A673 (cell line): ENCODE measurements at regions of chr1 and their contacts with region 1.

Region 1: GRCh38 chr1:60068393-60069045 is 5.1 kb downstream of the C1orf87 start:
- DNase-seq: peak; percentile 51
- H3K4me3 ChIP-seq: no peak overlapping the region
- H3K27ac ChIP-seq: no peak overlapping the region
- H3K4me1 ChIP-seq: peaks cover 4% of the 10 kb centered on the region
- H3K27me3 ChIP-seq: no peaks in the 10 kb centered on the region
- CTCF ChIP-seq: no peak

Region 2: DNA sequence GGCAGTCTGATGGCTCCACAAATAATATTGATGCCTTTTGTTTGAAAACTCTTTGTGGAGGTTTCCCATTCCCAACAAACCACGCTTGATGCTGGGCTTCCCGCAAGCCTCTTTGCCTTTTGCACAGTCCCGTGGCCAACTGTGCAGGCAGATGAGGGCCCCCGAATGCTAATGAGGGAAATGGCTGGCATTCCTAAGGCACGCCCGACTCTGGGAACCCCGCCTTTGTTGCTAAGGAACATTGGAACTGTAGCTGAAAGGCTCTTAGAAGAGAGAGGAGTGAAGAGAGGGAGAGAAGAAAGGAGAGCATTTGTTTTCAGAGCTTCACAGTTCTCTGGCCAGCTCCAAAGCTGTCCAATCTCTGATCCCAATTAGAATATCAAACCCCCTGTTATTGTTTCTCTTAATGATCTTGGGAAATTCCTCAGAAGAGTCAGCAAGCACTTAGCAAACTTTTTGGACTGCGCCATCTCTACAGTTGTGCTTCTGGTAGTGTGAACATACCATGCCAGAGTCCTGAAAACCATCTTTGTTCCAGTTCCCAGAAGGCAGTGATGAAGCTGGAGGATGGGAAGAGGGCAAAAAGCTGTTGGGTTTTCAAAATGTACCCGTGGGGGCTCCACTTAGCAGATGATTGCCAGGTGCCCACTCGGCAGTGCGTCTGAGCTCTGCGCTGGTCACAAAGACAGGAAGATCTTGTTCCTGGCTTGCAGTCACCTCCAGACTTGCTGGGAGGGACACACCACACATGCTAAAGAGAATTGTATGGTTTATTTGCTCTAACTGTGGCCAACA is 81.8 kb before region 1 on chr1:
- CTCF ChIA-PET with region 1: no interaction called
- POLR2A ChIA-PET with region 1: no interaction called
- intact Hi-C with region 1: loop called (anchors 10 kb)
- DNase-seq: peak; percentile 64
- H3K4me3 ChIP-seq: no peak overlapping the region
- H3K27ac ChIP-seq: no peak overlapping the region
- H3K4me1 ChIP-seq: peaks cover 11% of the 10 kb centered on the region
- H3K27me3 ChIP-seq: no peaks in the 10 kb centered on the region
- CTCF ChIP-seq: no peak

Region 3: DNA sequence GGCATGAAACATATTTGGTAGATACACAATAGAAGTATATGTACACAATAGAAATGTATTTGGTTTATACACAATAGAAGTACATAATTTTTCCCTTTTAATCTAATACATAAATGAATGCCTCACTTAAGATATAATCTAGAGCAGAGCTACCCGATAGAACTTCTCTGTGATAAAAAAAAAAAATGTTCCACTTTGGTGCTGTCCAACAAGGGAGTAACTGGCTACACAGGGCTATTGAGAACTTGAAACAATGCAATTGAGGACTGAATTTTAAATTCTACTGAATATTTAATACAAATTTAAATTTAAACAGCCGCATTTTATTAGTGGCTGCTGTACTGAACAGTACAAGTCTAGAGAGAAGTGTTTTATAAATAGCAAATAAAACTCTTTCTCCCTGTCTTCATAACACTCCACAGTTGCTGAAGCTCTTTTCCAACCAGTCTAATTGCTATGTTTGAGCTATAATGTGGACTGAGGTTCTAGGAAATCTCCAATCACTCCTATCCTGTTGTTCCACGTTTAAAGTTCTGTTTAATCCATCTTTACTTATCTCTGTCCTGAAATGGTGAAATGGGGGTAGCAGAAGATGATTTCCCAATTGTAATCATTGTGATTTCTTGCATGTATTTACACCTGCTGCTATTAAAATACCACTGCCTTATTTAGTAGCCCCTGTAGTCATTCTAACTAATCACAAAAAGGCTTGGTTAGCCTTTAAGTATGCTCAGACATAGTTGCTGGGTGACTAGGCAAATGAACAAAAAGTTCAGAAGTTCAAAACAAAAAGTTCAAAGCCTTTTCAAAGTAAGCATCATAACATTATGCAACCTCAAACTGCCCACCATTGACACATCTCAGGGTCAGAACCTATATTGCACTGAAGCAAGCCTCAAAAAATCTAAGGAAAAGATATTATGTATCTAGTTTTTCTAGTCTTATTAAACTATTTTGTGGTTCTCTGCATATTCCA is 197.3 kb after region 1 on chr1:
- CTCF ChIA-PET with region 1: no interaction called
- POLR2A ChIA-PET with region 1: interaction called, 11 read pairs
- intact Hi-C with region 1: no loop called
- DNase-seq: no peak
- H3K4me3 ChIP-seq: no peak overlapping the region
- H3K27ac ChIP-seq: no peak overlapping the region
- H3K4me1 ChIP-seq: no peaks in the 10 kb centered on the region
- H3K27me3 ChIP-seq: peaks cover 42% of the 10 kb centered on the region
- CTCF ChIP-seq: no peak